PC-9 (cell line): ENCODE measurements at regions of chr4 and their contacts with region 1.

Region 1: GRCh38 chr4:138021139-138021830 is 220.9 kb downstream of the SLC7A11 start:
- DNase-seq: no peak
- H3K4me3 ChIP-seq: no peak overlapping the region
- H3K27ac ChIP-seq: no peak overlapping the region
- H3K4me1 ChIP-seq: no peaks in the 10 kb centered on the region
- H3K27me3 ChIP-seq: no peaks in the 10 kb centered on the region
- CTCF ChIP-seq: no peak

Region 2: DNA sequence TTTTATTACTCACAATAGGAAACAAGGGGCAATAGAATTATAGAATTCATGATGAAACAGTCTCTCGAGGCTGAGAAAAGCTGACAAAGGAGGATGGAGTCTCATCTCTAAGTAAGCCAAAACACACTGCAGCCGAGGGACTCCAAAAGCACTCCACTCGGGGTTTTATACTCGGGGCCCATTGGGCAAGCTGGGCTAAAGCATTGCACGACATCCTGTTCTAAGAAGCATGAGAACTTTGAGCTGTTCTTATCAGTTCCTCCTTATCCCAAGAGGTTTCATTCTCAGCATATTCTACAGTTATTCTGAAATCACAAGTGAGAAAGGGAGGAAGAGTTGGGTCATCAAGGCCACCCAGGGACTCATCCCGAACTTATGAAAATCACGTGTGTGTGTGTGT is 1964.5 kb before region 1 on chr4:
- CTCF ChIA-PET with region 1: interaction called, 17 read pairs
- POLR2A ChIA-PET with region 1: no interaction called
- intact Hi-C with region 1: no loop called
- DNase-seq: no peak
- H3K4me3 ChIP-seq: no peak overlapping the region
- H3K27ac ChIP-seq: no peak overlapping the region
- H3K4me1 ChIP-seq: no peaks in the 10 kb centered on the region
- H3K27me3 ChIP-seq: no peaks in the 10 kb centered on the region
- CTCF ChIP-seq: no peak

Region 3: DNA sequence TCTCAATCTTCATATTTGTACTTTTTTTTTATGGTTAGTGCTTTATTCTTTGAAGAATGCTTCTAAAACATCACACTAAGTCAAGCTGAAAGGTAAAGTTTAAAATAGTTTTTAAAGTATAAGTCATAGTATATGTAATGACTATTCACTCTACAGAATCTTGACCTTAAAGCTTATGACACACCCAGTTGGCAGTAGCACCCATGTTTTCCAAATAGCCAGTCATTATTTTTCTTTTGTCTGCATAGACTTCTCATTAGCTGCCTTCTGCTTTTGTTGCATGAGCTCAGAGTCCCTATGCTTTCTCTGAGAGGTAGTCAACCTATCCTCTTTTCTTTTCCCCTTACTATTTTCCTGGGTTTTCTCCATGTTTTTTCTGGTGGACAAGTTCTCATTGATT is 720.5 kb before region 1 on chr4:
- CTCF ChIA-PET with region 1: no interaction called
- POLR2A ChIA-PET with region 1: interaction called, 12 read pairs
- intact Hi-C with region 1: no loop called
- DNase-seq: no peak
- H3K4me3 ChIP-seq: no peak overlapping the region
- H3K27ac ChIP-seq: no peak overlapping the region
- H3K4me1 ChIP-seq: no peaks in the 10 kb centered on the region
- H3K27me3 ChIP-seq: no peaks in the 10 kb centered on the region
- CTCF ChIP-seq: no peak